GM10248 (cell line): ENCODE measurements at regions of chr20 and their contacts with region 1.

Region 1: GRCh38 chr20:7971536-7972280 is 31.4 kb upstream of the HAO1 start:
- DNase-seq: no peak
- CTCF ChIP-seq: no peak

Region 2: DNA sequence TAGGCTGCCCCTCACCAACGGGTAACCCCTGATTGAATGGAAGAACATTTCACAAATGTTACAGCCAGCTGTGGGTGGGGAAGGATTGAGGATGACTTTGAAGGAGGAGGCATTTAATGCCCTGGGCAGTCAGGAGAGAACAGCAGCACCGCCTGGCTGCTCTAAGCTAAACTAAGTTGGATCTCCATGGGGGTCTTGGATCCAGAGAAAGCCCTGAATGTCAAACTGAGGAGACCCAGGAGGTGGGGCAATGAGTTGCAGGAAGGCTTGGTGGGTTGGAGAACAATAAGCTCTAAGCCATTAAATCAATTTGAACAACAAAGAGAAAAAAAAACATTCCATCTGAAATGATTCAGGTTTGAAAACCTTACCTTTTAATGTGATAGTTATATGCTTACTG is 12.5 kb after region 1 on chr20:
- CTCF ChIA-PET with region 1: interaction called, 10 read pairs
- POLR2A ChIA-PET with region 1: no interaction called
- DNase-seq: no peak
- CTCF ChIP-seq: no peak